Common myeloid progenitor, CD34-positive (primary cell): ENCODE measurements at regions of chr4 and their contacts with region 1.

Region 1: DNA sequence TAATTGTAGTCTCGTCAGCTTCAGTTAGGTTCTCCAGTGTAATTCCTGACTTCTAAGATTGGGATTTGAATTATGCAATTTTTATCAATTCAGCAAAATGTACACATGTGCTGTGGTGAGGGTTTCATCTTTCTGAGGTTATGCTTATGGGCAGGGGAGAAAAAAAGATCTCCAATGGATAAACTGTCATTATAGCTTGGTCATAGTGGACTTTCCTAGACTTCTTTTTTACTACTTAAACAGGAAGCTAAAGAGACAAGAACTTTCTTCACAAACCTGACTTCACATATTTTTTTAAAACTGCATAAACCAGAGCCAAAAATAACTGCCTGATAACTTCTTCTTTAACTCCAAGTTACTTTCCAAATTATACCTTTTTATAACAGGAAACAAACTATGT is 21.7 kb upstream of the SPP1 start:
- DNase-seq: peak in 2 of 3 donors; percentile 53 to 64
- H3K4me3 ChIP-seq: peak overlapping the region in 1 of 7 experiments; percentile 17
- H3K27ac ChIP-seq: no peak overlapping the region
- H3K4me1 ChIP-seq: peaks cover 4 to 52% (median 21%) of the 10 kb centered on the region in 4 experiments
- H3K27me3 ChIP-seq: no peaks in the 10 kb centered on the region

Region 2: DNA sequence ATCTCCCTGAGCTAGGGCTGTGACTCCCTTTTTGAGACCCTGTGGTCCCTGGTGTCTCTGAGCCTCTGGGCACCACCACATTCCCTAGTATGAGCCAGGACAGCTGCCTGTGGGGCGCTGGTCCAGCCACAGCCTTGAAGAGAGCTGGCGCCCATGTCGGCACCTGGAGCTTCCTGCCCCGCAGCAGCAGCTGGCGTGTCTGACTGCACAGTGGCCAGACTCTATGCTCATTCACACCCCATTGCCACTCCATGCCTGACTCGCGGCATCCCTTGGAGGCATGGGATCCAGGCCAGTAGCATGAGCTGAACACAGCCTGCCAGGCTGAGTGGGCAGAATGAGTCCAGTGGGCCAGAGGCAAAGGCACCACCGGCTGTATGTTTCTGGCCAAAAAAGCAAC is 13.4 kb after region 1 on chr4:
- CTCF ChIA-PET with region 1: interaction called, 33 read pairs
- POLR2A ChIA-PET with region 1: no interaction called
- DNase-seq: no peak
- H3K4me3 ChIP-seq: no peak overlapping the region
- H3K27ac ChIP-seq: no peak overlapping the region
- H3K4me1 ChIP-seq: peaks cover 0 to 9% (median 2%) of the 10 kb centered on the region in 4 experiments
- H3K27me3 ChIP-seq: no peaks in the 10 kb centered on the region